ENCODE measurements at regions of chr20 and their contacts with region 1.

Region 1: DNA sequence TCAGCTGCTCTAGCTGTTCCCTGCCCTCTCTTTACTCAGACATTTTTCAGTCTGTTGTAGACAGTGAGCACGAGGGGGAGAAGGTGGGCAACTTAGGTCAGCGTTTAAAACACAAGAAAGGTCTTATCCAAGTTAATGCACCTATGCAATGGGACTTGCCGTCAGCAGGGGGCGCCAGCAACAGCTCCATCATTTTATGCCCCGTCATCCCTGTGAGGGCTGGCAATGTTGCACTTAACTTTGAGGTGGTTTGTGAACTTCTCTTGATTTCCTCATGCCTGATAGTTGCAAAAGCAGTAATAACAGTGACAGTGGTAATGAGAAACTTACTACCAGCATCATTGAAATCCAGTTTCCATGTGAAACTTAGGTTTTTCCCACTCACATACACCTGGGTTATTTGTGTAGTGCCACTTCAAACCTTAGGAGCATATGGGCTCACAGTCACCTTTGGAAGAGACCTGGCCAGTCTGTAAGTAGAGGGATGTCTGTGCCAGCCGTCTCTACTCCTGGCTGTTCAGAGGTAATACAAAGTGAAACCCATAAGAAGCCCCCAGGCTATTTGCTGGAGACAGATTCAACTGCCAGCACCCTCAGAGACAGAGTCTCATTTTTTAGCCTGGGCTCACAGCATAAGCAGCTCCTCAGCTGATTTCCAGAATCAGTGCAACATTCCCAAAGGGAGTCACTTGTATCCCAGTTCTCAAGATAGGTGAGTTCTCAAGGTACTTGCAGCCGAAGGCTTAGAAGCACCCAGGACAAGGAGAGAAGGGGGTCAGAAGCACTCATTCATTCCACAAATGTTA is 44.8 kb upstream of the ID1 start:
- DNase-seq: peak; percentile 81 to 90
- H3K4me3 ChIP-seq: peak overlapping the region; percentile 3; the same call in 1 of the 2 replicates
- H3K27ac ChIP-seq: peak overlapping the region; percentile 99
- H3K4me1 ChIP-seq: peaks cover 71% of the 10 kb centered on the region
- H3K27me3 ChIP-seq: no peaks in the 10 kb centered on the region
- CTCF ChIP-seq: peak; percentile 95

Region 2: DNA sequence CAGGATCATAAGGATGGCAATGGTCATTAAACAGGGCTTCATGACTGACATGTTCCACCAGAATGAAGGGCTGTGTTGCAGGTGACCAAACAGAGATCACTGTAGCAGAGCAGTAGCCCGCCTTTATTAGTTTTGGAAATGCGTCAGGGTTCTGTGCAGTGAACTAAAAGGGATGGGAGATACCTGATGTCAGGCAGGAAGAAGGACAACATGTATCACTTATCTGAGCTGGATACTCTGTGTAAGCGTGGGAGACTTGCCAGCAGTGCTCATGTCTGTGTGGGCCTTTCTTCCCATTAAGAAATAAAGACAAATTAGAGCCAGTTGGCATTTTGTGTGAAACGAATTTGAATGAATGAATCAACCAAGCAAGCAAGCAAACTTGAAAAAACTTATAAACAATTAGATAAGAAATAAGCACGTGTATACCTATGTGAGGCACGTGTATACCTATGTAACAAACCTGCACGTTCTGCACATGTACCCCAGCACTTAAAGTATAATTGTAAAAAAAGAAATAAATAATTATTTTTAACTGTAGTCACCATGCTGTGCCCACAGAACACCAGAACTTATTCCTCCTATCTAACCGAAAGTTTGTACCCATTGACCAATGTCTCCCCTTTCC is 251.6 kb before region 1 on chr20 and contains the start of gene DEFB116:
- CTCF ChIA-PET with region 1: no interaction called
- POLR2A ChIA-PET with region 1: no interaction called
- intact Hi-C with region 1: loop called (anchors 5 kb)
- DNase-seq: no peak
- H3K4me3 ChIP-seq: no peak within 1 kb of the TSS
- H3K27ac ChIP-seq: no peak within 1 kb of the TSS
- H3K4me1 ChIP-seq: no peaks in the 10 kb centered on the region
- H3K27me3 ChIP-seq: no peaks in the 10 kb centered on the region
- CTCF ChIP-seq: no peak
- total RNA-seq, gene DEFB116: not detected in 2 replicates

Region 3: GRCh38 chr20:31572701-31573554 is 12.6 kb after region 1 on chr20:
- CTCF ChIA-PET with region 1: interaction called, 17 read pairs
- POLR2A ChIA-PET with region 1: no interaction called
- intact Hi-C with region 1: no loop called
- DNase-seq: peak; percentile 95 to 100
- H3K4me3 ChIP-seq: peak overlapping the region; percentile 64
- H3K27ac ChIP-seq: peak overlapping the region; percentile 96
- H3K4me1 ChIP-seq: peaks cover 46% of the 10 kb centered on the region
- H3K27me3 ChIP-seq: no peaks in the 10 kb centered on the region
- CTCF ChIP-seq: no peak

Region 4: GRCh38 chr20:31595654-31596411 is 35.5 kb after region 1 on chr20:
- CTCF ChIA-PET with region 1: interaction called, 5 read pairs
- POLR2A ChIA-PET with region 1: interaction called, 6 read pairs
- intact Hi-C with region 1: loop called (anchors 1 kb)
- DNase-seq: peak; percentile 60 to 87
- H3K4me3 ChIP-seq: no peak overlapping the region
- H3K27ac ChIP-seq: peak overlapping the region; percentile 96
- H3K4me1 ChIP-seq: peaks cover 44% of the 10 kb centered on the region
- H3K27me3 ChIP-seq: no peaks in the 10 kb centered on the region
- CTCF ChIP-seq: no peak

Region 5: DNA sequence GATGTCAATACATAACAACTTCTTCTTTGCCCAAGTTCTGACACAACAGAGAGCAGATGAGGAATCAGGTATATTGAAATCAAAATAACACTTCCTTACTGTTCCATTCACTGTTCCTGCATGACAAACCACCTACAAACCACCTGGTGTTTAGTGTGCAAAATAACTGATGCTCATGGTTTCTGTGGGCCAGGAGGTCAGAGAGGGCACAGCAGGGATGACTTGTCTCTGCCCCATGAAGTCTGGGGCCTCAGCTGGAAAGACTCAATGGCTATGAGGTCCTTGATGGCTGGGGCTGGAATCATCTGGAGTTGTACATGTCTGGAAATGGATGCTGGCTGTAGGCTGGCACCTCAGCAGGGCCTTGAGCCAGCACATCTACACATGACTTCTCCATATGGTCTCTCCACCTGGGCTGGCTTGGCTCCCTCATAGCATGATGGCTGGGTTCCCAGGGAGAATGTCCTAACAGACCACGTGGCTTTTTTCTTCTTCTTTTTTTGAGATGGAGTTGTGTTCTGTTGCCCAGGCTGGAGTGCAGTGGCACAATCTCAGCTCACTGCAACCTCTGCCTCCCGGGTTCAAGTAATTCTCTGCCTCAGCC is 70.0 kb after region 1 on chr20:
- CTCF ChIA-PET with region 1: interaction called, 13 read pairs
- POLR2A ChIA-PET with region 1: no interaction called
- intact Hi-C with region 1: no loop called
- DNase-seq: no peak
- H3K4me3 ChIP-seq: no peak overlapping the region
- H3K27ac ChIP-seq: no peak overlapping the region
- H3K4me1 ChIP-seq: no peaks in the 10 kb centered on the region
- H3K27me3 ChIP-seq: no peaks in the 10 kb centered on the region
- CTCF ChIP-seq: no peak

Region 6: DNA sequence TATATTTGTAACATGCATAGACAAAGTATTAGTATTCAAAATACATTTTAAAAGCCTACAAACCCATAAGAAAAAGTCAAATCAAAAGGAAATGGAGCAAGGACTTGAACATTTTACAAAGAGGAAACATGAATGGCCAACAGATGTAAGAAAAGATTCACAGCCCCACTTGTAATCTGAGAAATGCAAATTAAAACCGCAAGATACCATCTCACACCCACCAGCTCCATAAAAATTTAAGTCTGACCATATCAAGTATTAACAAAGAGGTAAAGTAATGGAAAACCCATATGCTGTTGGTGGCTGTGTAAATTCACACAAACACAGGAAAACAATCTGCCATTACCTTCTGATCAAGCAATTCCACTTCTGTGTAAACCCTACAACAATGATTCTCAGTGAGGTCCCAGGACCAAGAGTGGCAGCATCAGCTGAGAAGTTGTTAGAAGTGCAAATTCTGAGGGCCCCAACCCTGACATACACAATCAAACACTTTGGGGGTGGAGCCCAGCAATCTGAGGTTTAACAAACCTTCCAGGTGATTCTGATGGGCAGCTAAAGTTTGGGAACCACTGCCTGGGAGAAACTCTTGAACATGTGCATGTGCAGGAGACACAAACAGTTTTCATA is 131.5 kb after region 1 on chr20:
- CTCF ChIA-PET with region 1: interaction called, 13 read pairs
- POLR2A ChIA-PET with region 1: no interaction called
- intact Hi-C with region 1: no loop called
- DNase-seq: no peak
- H3K4me3 ChIP-seq: no peak overlapping the region
- H3K27ac ChIP-seq: peak overlapping the region; percentile 8; the same call in 1 of the 2 replicates
- H3K4me1 ChIP-seq: peaks cover 48% of the 10 kb centered on the region
- H3K27me3 ChIP-seq: no peaks in the 10 kb centered on the region
- CTCF ChIP-seq: no peak